Activated naive CD4-positive, alpha-beta T cell treated with anti-CD3 and anti-CD28 coated beads for 36 hours (primary cell): ENCODE measurements at regions of chr1 and their contacts with region 1.

Region 1: GRCh38 chr1:84690397-84691121 is at the start of gene SSX2IP:
- DNase-seq: peak; percentile 100
- H3K4me3 Mint-ChIP-seq: peak within 1 kb of the TSS; percentile 92
- H3K27ac Mint-ChIP-seq: peak within 1 kb of the TSS; percentile 91
- H3K4me1 Mint-ChIP-seq: peaks cover 59% of the 10 kb centered on the region
- H3K27me3 Mint-ChIP-seq: peaks cover 3% of the 10 kb centered on the region
- total RNA-seq, gene SSX2IP: 11.9 to 12.6 TPM

Region 2: GRCh38 chr1:84298328-84298683 is 392.3 kb before region 1 on chr1:
- CTCF ChIA-PET with region 1: no interaction called
- intact Hi-C with region 1: loop called (anchors 2 kb)
- DNase-seq: peak; percentile 54
- H3K4me3 Mint-ChIP-seq: peak overlapping the region; percentile 81
- H3K27ac Mint-ChIP-seq: peak overlapping the region; percentile 28
- H3K4me1 Mint-ChIP-seq: peaks cover 35% of the 10 kb centered on the region
- H3K27me3 Mint-ChIP-seq: no peaks in the 10 kb centered on the region

Region 3: DNA sequence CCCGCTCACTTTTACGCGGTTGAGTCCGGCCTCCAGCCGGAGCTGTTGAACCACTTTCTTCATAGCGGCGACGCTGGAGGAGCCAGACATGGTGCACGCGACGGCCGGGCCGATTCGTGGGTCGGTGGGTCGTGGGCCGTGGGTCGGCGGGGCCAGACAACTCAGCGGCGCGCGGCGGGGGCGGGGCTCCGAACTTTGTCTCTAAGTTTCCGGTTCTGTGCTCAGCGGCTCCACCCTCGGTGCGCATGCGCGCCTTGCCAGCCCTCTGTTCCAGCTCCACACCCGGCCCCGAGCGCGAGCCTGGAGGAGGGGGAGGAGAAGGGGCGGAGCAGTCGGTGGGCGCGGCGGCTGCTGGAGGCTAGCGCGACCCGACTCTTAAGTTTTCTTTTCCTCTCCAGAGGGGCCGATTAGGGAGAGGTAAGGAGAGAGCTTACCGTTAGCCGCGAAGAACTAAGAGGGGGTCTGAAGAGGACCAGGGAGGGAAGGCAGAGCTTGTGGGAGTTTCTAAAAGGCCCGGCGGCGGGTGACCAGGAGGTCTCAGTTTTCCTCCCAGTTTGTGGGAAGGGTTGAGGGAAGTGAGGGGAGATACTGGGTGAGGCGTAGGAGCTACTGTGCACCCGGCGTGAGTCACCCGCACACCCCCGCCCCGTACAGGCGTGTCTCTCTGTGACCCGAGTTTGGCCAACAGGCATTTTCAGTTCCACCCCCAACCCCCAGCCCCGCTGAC is 184.4 kb before region 1 on chr1 and contains the starts of genes GNG5 and SPATA1:
- CTCF ChIA-PET with region 1: no interaction called
- intact Hi-C with region 1: loop called (anchors 1 kb)
- DNase-seq: peak; percentile 97
- H3K4me3 Mint-ChIP-seq: peak within 1 kb of the TSS; percentile 100
- H3K27ac Mint-ChIP-seq: peak within 1 kb of the TSS; percentile 98
- H3K4me1 Mint-ChIP-seq: peaks cover 27% of the 10 kb centered on the region
- H3K27me3 Mint-ChIP-seq: no peaks in the 10 kb centered on the region
- total RNA-seq, gene GNG5: 128 to 132 TPM
- total RNA-seq, gene SPATA1: 1.8 to 2.7 TPM

Region 4: DNA sequence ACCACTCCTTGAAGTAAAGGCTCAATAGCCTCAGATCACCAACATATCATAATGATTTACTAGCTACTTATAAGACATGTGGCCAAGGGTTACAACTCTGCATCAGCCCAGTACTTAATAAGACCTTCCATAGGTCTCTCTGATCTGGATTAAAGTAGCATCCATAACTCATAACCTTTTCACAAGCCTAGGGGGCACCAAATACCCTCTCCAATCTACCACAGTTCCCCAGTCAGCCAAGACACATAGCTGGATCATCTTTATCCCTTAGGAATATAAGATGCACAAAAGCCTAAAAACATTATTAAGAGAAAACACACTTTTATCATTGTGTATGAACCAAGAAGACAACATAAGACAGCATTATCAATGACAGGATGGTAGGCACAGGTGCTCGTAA is 22.4 kb before region 1 on chr1:
- CTCF ChIA-PET with region 1: interaction called, 11 read pairs
- intact Hi-C with region 1: loop called (anchors 2 kb)
- DNase-seq: peak; percentile 13
- H3K4me3 Mint-ChIP-seq: no peak overlapping the region
- H3K27ac Mint-ChIP-seq: no peak overlapping the region
- H3K4me1 Mint-ChIP-seq: peaks cover 5% of the 10 kb centered on the region
- H3K27me3 Mint-ChIP-seq: no peaks in the 10 kb centered on the region

Region 5: GRCh38 chr1:84795966-84796600 is 105.5 kb after region 1 on chr1:
- CTCF ChIA-PET with region 1: no interaction called
- intact Hi-C with region 1: no loop called
- DNase-seq: no peak
- H3K4me3 Mint-ChIP-seq: no peak overlapping the region
- H3K27ac Mint-ChIP-seq: no peak overlapping the region
- H3K4me1 Mint-ChIP-seq: no peaks in the 10 kb centered on the region
- H3K27me3 Mint-ChIP-seq: peaks cover 3% of the 10 kb centered on the region

Region 6: GRCh38 chr1:85200870-85201339 is 510.3 kb after region 1 on chr1 and contains the start of gene SYDE2:
- CTCF ChIA-PET with region 1: no interaction called
- intact Hi-C with region 1: loop called (anchors 1 kb)
- DNase-seq: peak; percentile 76
- H3K4me3 Mint-ChIP-seq: peak within 1 kb of the TSS; percentile 98
- H3K27ac Mint-ChIP-seq: peak within 1 kb of the TSS; percentile 89
- H3K4me1 Mint-ChIP-seq: peaks cover 33% of the 10 kb centered on the region
- H3K27me3 Mint-ChIP-seq: no peaks in the 10 kb centered on the region
- total RNA-seq, gene SYDE2: 4.4 to 5.1 TPM

Region 7: GRCh38 chr1:86395771-86396497 is 1705.4 kb after region 1 on chr1 and contains the start of gene ODF2L:
- CTCF ChIA-PET with region 1: no interaction called
- intact Hi-C with region 1: loop called (anchors 10 kb)
- DNase-seq: peak; percentile 94
- H3K4me3 Mint-ChIP-seq: peak within 1 kb of the TSS; percentile 95
- H3K27ac Mint-ChIP-seq: peak within 1 kb of the TSS; percentile 91
- H3K4me1 Mint-ChIP-seq: peaks cover 44% of the 10 kb centered on the region
- H3K27me3 Mint-ChIP-seq: no peaks in the 10 kb centered on the region
- total RNA-seq, gene ODF2L: 17.8 to 18.0 TPM